K562 (cell line): ENCODE measurements at regions of chr18 and their contacts with region 1.

Region 1: GRCh38 chr18:31722369-31722957 is 38.1 kb upstream of the B4GALT6 start:
- DNase-seq: peak; percentile 75 to 87 (median 80)
- ATAC-seq: peak; percentile 98
- H3K4me3 ChIP-seq: no peak overlapping the region
- H3K27ac ChIP-seq: no peak overlapping the region
- H3K4me1 ChIP-seq: peaks cover 0 to 6% of the 10 kb centered on the region in 2 experiments; a peak in 1 of 5 replicates
- H3K27me3 ChIP-seq: peaks cover 9 to 22% of the 10 kb centered on the region in 2 experiments; a peak in 4 of 5 replicates
- CTCF ChIP-seq: peak; percentile 79 to 91 (median 84)
- EP300 ChIP-seq: no peak
- POLR2A ChIP-seq: no peak
- RAD21 ChIP-seq: peak; percentile 79 to 90

Region 2: GRCh38 chr18:30999186-30999585 is 723.3 kb before region 1 on chr18:
- CTCF ChIA-PET with region 1: no interaction called
- POLR2A ChIA-PET with region 1: no interaction called
- in situ Hi-C with region 1: no loop called
- intact Hi-C with region 1: loop called (anchors 10 kb)
- DNase-seq: no peak
- ATAC-seq: no peak
- H3K4me3 ChIP-seq: no peak overlapping the region
- H3K27ac ChIP-seq: no peak overlapping the region
- H3K4me1 ChIP-seq: no peaks in the 10 kb centered on the region
- H3K27me3 ChIP-seq: no peaks in the 10 kb centered on the region; a peak in 1 of 5 replicates
- CTCF ChIP-seq: peak in 1 of 3 experiments; percentile 52; a peak in 2 of 6 replicates
- EP300 ChIP-seq: no peak
- POLR2A ChIP-seq: no peak
- RAD21 ChIP-seq: peak; percentile 51 to 53

Region 3: GRCh38 chr18:31301201-31301655 is 421.2 kb before region 1 on chr18:
- CTCF ChIA-PET with region 1: no interaction called
- POLR2A ChIA-PET with region 1: no interaction called
- in situ Hi-C with region 1: no loop called
- intact Hi-C with region 1: no loop called
- DNase-seq: no peak
- ATAC-seq: no peak
- H3K4me3 ChIP-seq: no peak overlapping the region
- H3K27ac ChIP-seq: no peak overlapping the region
- H3K4me1 ChIP-seq: no peaks in the 10 kb centered on the region
- H3K27me3 ChIP-seq: no peaks in the 10 kb centered on the region
- CTCF ChIP-seq: no peak
- EP300 ChIP-seq: no peak
- POLR2A ChIP-seq: no peak
- RAD21 ChIP-seq: no peak